Left colon (tissue), 2 donors: ENCODE measurements at regions of chr16 and their contacts with region 1.

Region 1: DNA sequence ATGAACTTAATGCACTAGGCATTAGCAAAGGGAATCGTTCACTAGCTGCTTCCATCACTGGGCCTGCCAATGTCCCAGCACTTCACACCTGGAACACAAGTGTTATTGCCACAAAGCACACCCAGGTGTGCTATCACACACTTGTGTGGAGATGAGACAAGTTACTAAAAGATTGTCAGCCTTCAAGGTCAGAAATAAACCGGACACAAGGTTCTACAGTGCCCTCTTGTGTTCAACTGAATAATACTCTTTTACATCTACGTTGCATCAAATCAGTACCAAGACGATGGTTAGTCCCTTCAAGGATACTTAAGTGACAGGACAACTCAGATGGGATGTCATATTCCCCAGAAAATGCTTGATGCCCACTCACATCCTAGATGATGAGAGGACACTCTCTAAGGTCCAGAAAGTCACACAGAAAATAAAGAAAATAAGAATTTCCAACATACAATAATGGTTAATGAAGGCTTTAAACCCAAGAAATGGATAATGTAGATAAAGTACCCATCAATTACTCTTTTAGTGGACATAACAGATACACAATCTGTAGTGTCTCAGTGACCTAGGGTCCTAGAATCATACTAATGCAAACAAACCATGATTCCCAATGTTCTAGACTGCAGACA is 16.4 kb upstream of the GLG1 start:
- DNase-seq: no peak
- ATAC-seq: peak; percentile 87

Region 2: DNA sequence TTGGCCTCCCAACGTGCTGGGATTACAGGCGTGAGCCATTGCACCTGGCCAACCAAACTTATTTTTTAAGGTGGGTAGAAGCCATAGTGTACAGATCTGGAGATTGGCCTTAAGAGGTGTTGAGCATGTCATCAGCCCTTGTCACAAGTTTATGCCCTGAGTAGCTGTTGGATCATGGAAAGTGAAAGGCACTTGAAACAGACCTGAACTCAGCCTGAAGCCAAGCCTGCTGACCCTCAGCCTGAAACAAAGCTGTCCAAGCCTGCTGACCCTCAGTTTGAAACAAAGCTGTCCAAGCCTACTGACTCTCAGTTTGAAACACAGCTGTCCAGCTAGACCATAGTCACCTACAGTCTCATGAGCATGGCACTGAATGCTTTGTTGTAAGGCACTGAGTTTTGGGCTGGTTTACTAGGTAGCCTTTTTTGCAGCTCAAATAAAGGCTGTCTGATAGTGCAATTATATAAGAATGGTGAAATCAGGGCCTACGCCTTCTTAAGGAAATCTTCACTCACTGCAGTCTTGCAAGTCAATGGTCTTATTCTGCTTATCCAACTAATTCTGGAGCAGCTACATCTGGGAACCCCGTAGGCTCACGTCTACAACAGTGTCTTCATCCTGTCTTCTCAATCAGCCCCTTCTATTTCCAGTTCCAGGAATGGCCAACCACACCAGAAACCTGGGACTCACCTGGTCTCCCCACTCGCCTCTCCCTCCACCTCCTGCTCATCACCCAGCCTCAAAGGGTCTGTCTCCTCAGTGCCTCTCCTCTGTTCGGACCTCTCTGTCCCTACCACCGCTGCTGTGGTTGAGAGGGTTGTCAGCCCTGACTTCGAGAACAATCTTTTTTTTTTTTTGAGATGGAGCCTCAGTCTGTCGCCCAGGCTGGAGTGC is 250.1 kb before region 1 on chr16:
- intact Hi-C with region 1: no loop called
- DNase-seq: no peak
- ATAC-seq: no peak

Region 3: DNA sequence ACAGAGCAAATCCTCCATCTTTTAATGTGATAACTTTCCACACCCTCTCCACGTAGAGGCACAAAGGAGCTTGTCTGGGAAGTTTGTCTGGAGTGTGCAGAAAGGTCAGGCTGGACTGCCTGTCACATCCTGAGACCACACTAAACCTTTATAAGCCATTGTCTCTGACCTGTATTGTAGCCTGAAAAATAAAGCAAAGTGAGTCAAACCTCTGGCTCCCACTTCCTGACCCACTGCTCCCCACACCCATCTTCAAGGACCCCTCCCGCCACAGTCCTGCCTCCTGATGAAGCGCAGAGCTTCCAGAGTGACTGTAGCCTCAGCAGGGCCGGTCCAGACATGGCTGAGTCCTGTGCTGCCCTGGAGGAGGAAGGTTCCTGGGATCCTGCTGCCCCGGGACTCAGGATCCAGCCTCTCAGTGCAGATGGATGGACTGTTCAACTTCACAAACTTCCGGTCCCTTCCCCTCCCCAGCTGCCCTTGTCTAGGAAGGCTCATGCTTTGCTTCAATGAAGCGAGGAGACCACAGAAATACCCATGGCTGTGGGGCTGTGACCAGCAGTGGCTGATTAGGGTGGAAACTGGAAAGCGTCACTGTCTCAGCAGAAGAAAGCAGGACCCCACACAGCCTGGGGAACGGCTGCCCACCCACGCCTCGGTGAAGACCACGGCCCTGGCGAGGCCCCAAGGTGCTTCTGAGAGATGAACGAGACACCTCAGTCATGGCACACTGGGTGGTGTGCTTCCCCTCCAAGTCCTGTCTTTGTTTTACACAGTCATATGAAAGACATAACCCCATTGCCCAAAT is 171.2 kb before region 1 on chr16:
- intact Hi-C with region 1: loop called in 1 of 2 experiments (anchors 10 kb)
- DNase-seq: no peak
- ATAC-seq: no peak

Region 4: DNA sequence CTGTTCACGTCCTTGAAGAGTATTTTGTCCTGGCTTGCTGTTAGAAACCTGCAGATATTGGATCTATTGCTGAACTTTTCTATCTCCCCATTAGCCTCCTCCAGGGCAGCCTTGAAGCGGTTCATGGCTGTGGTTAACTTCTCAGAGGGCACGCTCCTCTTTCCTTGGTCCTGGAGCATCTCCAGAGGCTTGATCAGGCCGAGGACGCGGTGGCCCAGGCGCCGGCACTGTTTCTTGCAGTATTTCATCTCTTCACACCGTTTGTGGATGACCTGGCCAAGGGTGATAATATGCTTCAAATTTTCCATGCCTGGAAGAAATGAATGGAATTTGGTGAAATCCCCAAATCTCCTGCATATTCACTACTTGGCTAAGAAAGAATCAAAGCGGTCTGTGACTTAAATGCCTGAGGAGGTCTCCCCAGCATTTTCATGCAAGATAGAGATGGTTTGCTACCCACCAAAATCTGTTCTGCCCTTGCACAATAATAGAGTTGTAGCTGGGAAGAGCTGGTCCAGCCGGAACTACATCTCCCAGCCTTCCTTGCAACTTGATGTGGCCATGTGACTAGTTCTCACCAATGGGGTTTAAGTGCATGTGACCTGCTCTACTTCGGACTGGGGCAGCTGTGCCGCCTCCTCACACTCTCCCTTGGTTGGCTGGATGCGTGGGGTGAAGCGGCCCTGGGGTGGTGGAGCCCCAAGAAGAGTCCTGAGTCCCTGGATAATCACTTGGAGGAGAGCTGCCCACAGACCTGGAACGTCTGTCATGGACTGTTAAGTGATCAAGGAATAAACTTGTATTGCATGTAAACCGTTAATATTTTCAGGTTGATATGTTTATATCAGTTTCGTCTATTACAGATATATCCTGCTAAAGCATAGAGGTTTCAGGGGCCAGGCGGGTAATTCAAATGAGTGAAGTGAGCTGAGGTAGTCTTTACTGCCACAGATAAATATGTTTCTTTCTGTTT is 72.4 kb after region 1 on chr16:
- intact Hi-C with region 1: no loop called
- DNase-seq: peak; percentile 76 to 84
- ATAC-seq: peak; percentile 84

Region 5: DNA sequence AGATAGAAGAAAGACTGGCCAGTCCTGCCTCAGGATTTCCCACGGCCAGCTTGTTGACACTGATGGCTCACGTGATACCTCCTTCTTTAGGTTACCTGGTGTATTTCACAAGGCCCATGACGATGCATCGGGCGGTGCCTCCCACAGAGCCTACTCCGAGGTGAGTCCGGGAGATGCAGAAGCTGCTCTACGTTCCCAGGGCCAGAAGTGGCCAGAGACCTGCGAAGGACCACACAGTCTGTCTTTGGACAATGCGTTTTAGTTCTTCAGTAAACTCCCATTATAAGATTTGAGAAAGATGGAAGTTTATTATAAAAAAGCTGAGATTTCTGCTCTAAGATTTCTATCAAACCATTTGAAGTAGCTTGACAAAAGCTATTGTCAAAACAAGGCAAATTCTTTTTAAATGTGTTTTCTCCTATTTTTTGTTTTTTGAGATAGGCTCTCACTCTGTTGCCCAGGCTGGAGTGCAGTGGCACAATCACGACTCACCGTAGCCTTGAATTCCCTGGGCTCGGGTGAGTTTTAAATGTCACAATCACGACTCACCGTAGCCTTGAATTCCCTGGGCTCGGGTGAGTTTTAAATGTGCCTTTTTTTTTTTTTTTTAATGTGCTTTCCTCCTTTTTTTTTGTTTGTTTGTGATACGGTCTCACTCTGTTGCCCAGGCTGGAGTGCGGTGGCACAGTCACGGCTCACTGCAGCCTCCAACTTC is 220.5 kb after region 1 on chr16:
- intact Hi-C with region 1: no loop called
- DNase-seq: no peak
- ATAC-seq: no peak